GM12878 (cell line): ENCODE measurements at regions of chr4 and their contacts with region 1.

Region 1: DNA sequence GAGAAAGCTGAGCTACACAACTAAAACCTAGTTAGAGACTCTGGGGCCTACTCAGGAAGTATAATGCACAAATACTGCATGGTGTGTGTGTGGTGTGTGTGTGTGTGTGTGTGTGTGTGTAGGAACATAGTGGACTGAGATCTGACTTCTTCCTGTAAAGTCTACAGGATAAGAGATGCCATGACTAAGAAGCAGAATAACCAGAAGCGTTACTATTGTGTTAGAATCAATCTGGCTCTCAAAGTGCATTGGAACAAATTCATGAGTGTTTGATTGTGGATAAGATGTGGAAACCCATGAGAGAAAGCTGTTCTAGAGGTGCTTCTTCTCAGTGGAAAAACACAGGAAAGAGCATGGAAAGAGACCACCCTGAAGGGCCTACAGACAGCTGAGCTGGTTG is 302.1 kb downstream of the INPP4B start:
- DNase-seq: no peak
- ATAC-seq: peak; percentile 17
- H3K4me3 ChIP-seq: no peak overlapping the region
- H3K27ac ChIP-seq: no peak overlapping the region
- H3K4me1 ChIP-seq: no peaks in the 10 kb centered on the region
- H3K27me3 ChIP-seq: no peaks in the 10 kb centered on the region
- CTCF ChIP-seq: no peak
- EP300 ChIP-seq: no peak
- POLR2A ChIP-seq: no peak
- RAD21 ChIP-seq: no peak

Region 2: DNA sequence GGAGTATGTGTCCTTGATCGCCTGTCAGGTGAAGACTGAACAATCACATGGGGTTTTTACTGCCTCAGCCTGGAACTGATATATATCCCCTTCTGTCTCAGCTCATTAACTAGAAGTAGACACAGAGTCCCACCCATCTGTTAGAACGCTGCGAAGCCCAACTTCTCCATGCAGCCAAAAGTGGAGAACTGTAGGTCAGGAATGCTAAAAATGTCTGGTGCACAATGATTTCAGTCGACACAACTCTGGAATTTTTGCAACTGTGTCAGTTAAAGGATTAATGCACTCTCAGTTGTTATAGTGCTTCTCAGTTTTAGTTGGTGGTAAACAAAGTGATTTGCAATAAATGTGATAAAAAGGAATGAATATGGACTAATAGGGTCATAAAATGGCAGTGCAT is 14.8 kb after region 1 on chr4:
- CTCF ChIA-PET with region 1: interaction called, 19 read pairs
- POLR2A ChIA-PET with region 1: interaction called, 6 read pairs
- RAD21 ChIA-PET with region 1: interaction called, 47 read pairs
- SMC1A ChIA-PET with region 1: interaction called, 115 read pairs
- in situ Hi-C with region 1: no loop called
- intact Hi-C with region 1: no loop called
- DNase-seq: no peak
- ATAC-seq: no peak
- H3K4me3 ChIP-seq: no peak overlapping the region
- H3K27ac ChIP-seq: no peak overlapping the region
- H3K4me1 ChIP-seq: no peaks in the 10 kb centered on the region
- H3K27me3 ChIP-seq: no peaks in the 10 kb centered on the region
- CTCF ChIP-seq: no peak
- EP300 ChIP-seq: no peak
- POLR2A ChIP-seq: no peak
- RAD21 ChIP-seq: no peak

Region 3: DNA sequence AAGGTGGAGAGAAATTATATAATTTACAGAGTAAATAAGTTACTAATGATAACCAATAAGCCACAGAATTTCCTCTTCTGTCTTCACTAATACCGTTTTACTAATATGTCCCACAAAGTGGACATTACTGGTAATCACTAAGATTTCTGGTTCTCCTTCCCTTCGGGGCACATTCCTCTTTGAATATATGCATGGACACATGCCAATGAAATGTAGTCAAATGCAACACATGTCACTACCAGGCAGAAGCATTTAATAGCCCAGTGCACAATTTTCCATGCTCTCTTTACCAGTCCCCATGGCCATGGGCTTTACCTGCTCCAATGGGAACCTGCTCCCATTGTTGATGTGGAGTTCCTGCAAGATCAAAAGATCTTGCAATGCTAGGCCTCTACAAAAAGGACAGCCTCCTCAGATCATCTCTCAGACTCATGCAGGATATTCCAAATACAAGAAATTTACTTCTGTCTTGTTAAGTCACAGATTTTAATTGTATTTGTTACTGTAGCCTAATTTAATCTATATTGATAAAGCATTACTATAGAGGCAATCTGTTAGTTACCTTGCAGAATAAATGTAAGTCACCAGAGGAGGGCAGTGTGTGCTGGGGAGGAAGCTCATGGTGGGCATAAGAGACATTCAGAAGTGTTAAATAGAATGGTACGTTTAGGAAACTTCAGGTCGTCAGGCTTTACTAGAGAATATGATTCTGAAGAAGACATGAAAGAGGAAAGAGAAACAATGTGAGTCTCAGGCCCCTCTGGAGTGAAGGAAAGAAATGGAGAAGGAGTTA is 339.2 kb after region 1 on chr4:
- CTCF ChIA-PET with region 1: no interaction called
- POLR2A ChIA-PET with region 1: no interaction called
- RAD21 ChIA-PET with region 1: no interaction called
- SMC1A ChIA-PET with region 1: no interaction called
- in situ Hi-C with region 1: no loop called
- intact Hi-C with region 1: no loop called
- DNase-seq: no peak
- ATAC-seq: peak; percentile 57; the same call in 2 of the 3 replicates
- H3K4me3 ChIP-seq: no peak overlapping the region
- H3K27ac ChIP-seq: no peak overlapping the region
- H3K4me1 ChIP-seq: no peaks in the 10 kb centered on the region
- H3K27me3 ChIP-seq: no peaks in the 10 kb centered on the region
- CTCF ChIP-seq: peak in 2 of 3 experiments; percentile 20 to 30; a peak in 2 of 6 replicates
- EP300 ChIP-seq: no peak
- POLR2A ChIP-seq: no peak
- RAD21 ChIP-seq: peak; percentile 25; the same call in 1 of the 2 replicates